A549 (cell line): ENCODE measurements at regions of chr2 and their contacts with region 1.

Region 1: GRCh38 chr2:118855451-118856279 is 8.2 kb upstream of the EN1 start:
- DNase-seq: peak; percentile 78 to 91
- ATAC-seq: peak; percentile 91 to 95
- H3K4me3 ChIP-seq: peak overlapping the region; percentile 45
- H3K27ac ChIP-seq: peak overlapping the region; percentile 47 to 85; a peak in 5 of 6 replicates
- H3K4me1 ChIP-seq: peaks cover 4% of the 10 kb centered on the region; the same call in 2 of the 3 replicates
- CTCF ChIP-seq: peak; percentile 95
- EP300 ChIP-seq: no peak
- POLR2A ChIP-seq: no peak
- RAD21 ChIP-seq: peak; percentile 85 to 97

Region 2: DNA sequence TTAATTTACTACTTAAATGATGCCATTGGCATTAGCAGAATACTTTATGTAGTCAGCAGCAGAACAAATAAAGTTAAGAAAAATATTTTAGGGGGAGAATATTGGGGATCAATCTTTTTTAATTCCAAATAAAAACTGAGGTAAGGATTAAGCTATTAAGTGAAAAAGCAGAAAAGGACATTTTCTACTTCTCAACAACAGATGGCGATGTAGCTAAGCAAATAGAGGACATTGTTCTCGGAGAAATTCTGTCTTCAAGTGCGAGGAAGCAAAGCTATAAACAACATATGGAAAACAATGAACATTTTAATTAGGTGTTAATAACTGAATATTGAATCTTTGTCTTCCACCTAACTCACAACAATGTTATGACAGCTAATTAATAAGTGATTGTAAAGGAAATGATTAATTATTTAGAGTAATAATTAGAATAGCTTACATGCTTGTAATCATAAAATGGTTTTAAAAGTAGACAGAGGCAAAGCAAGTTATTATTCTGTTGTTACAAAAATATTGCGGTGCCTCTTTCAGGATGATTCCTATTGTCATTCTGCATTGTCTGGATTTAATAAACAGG is 808.9 kb before region 1 on chr2:
- CTCF ChIA-PET with region 1: interaction called, 31 read pairs
- POLR2A ChIA-PET with region 1: no interaction called
- DNase-seq: peak; percentile 18 to 48
- ATAC-seq: peak; percentile 63 to 71; a peak in 3 of 6 replicates
- H3K4me3 ChIP-seq: peak overlapping the region; percentile 31; the same call in 1 of the 3 replicates
- H3K27ac ChIP-seq: no peak overlapping the region
- H3K4me1 ChIP-seq: peaks cover 19% of the 10 kb centered on the region; the same call in 2 of the 3 replicates
- CTCF ChIP-seq: peak; percentile 80
- EP300 ChIP-seq: no peak
- POLR2A ChIP-seq: no peak
- RAD21 ChIP-seq: peak; percentile 80 to 83

Region 3: GRCh38 chr2:118221666-118222594 is 633.7 kb before region 1 on chr2:
- CTCF ChIA-PET with region 1: interaction called, 43 read pairs
- POLR2A ChIA-PET with region 1: no interaction called
- DNase-seq: peak; percentile 54 to 63
- ATAC-seq: peak; percentile 85 to 95; a peak in 5 of 6 replicates
- H3K4me3 ChIP-seq: no peak overlapping the region
- H3K27ac ChIP-seq: no peak overlapping the region
- H3K4me1 ChIP-seq: no peaks in the 10 kb centered on the region
- CTCF ChIP-seq: peak; percentile 81
- EP300 ChIP-seq: no peak
- POLR2A ChIP-seq: no peak
- RAD21 ChIP-seq: peak; percentile 85 to 87

Region 4: GRCh38 chr2:118388771-118389170 is 466.9 kb before region 1 on chr2:
- CTCF ChIA-PET with region 1: interaction called, 11 read pairs
- POLR2A ChIA-PET with region 1: no interaction called
- DNase-seq: peak in 1 of 2 experiments; percentile 33
- ATAC-seq: peak in 1 of 2 experiments; percentile 43; a peak in 2 of 6 replicates
- H3K4me3 ChIP-seq: no peak overlapping the region
- H3K27ac ChIP-seq: peak overlapping the region; percentile 33 to 70; a peak in 5 of 6 replicates
- H3K4me1 ChIP-seq: peaks cover 27% of the 10 kb centered on the region
- CTCF ChIP-seq: no peak
- EP300 ChIP-seq: no peak
- POLR2A ChIP-seq: no peak
- RAD21 ChIP-seq: no peak

Region 5: DNA sequence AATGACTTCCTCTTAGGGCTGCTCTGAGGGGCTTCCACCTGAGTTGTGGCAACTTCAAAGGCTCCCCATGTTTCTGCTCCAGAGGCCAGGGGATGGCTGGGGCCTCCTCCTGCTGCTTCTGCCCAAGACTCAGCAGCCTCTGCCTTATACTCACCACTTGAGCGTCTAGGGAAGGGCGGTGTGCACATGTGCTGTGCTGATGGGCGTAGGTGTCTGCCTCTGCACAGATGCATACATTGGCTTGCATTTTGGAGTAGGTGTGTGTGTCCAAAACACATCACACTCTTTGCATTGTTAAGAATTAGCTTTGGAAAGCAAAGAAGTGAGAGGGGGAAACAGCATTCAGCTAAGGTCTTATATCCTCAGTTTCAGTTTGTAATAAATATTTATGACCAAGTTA is 93.4 kb before region 1 on chr2:
- CTCF ChIA-PET with region 1: interaction called, 10 read pairs
- POLR2A ChIA-PET with region 1: no interaction called
- DNase-seq: no peak
- ATAC-seq: no peak
- H3K4me3 ChIP-seq: no peak overlapping the region
- H3K27ac ChIP-seq: no peak overlapping the region
- H3K4me1 ChIP-seq: no peaks in the 10 kb centered on the region
- CTCF ChIP-seq: no peak
- EP300 ChIP-seq: no peak
- POLR2A ChIP-seq: no peak
- RAD21 ChIP-seq: no peak

Region 6: GRCh38 chr2:118838741-118839455 is 16.8 kb before region 1 on chr2:
- CTCF ChIA-PET with region 1: interaction called, 35 read pairs
- POLR2A ChIA-PET with region 1: no interaction called
- DNase-seq: no peak
- ATAC-seq: no peak
- H3K4me3 ChIP-seq: no peak overlapping the region
- H3K27ac ChIP-seq: no peak overlapping the region
- H3K4me1 ChIP-seq: peaks cover 6% of the 10 kb centered on the region; the same call in 1 of the 3 replicates
- CTCF ChIP-seq: no peak
- EP300 ChIP-seq: no peak
- POLR2A ChIP-seq: no peak
- RAD21 ChIP-seq: no peak

Region 7: DNA sequence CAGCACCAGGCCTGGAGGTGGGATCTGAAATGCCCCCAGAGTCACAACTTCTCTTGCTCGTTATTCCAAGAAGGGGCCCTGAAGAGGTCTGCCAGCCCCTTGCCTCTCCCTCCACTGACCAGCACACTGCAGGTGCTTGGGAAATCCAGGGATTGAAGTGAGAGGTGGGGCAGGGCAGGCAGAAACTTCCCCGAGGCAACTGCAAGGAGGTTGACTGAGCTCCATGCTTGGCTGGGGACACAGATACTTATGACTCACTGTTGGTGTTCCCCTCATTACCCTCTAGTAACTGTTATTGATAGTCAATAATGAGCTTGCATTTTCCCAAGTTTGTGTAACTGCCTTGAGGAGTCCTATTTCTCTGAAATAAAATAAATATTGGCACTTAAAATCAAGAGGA is 133.8 kb after region 1 on chr2:
- CTCF ChIA-PET with region 1: no interaction called
- POLR2A ChIA-PET with region 1: no interaction called
- DNase-seq: no peak
- ATAC-seq: no peak
- H3K4me3 ChIP-seq: no peak overlapping the region
- H3K27ac ChIP-seq: no peak overlapping the region
- H3K4me1 ChIP-seq: no peaks in the 10 kb centered on the region
- CTCF ChIP-seq: no peak
- EP300 ChIP-seq: no peak
- POLR2A ChIP-seq: no peak
- RAD21 ChIP-seq: no peak